Mammary epithelial cell (primary cell): ENCODE measurements at regions of chr3 and their contacts with region 1.

Region 1: GRCh38 chr3:52444860-52445793 is at the start of gene SEMA3G:
- DNase-seq: peak; percentile 50
- H3K4me3 ChIP-seq: peak within 1 kb of the TSS in 1 of 3 experiments; percentile 19
- H3K27ac ChIP-seq: no peak within 1 kb of the TSS
- H3K4me1 ChIP-seq: peaks cover 6% of the 10 kb centered on the region
- H3K27me3 ChIP-seq: no peaks in the 10 kb centered on the region
- CTCF ChIP-seq: peak; percentile 37 to 64
- total RNA-seq, gene SEMA3G: 0.45 to 0.50 TPM

Region 2: DNA sequence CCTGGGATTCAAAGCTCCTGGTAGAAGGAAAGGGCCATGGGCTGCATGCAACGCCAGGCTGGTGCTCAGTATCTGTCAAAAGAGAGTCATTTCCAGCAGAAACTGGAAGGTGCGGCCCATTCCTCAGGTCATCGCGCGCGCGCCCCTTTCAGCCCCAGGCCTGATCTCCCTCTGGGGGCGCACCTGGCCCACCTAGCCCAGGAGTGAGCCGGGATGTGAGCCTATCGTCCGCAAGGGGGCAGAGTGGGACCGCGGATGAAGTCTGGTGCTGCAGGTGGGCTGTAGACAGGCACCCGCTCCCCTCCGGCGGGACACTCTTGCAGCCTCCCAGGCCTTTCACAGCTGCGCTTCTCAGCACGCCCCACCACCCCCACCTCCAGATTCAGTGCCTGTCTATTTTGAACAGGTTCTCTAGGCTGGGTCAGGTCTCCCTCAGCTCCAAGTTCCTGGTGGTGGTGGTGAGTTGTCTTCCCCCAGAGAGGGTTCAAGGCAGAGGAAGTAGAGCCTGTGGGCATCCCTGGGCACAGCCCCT is 443.6 kb before region 1 on chr3:
- CTCF ChIA-PET with region 1: no interaction called
- dilution Hi-C with region 1: no loop called
- in situ Hi-C with region 1: no loop called
- intact Hi-C with region 1: loop called (anchors 10 kb)
- DNase-seq: peak; percentile 49
- H3K4me3 ChIP-seq: no peak overlapping the region
- H3K27ac ChIP-seq: no peak overlapping the region
- H3K4me1 ChIP-seq: peaks cover 35% of the 10 kb centered on the region
- H3K27me3 ChIP-seq: no peaks in the 10 kb centered on the region
- CTCF ChIP-seq: peak; percentile 75 to 90

Region 3: GRCh38 chr3:52088445-52089367 is 356.4 kb before region 1 on chr3:
- CTCF ChIA-PET with region 1: no interaction called
- dilution Hi-C with region 1: no loop called
- in situ Hi-C with region 1: no loop called
- intact Hi-C with region 1: no loop called
- DNase-seq: peak; percentile 53
- H3K4me3 ChIP-seq: no peak overlapping the region
- H3K27ac ChIP-seq: no peak overlapping the region
- H3K4me1 ChIP-seq: peaks cover 20% of the 10 kb centered on the region
- H3K27me3 ChIP-seq: no peaks in the 10 kb centered on the region
- CTCF ChIP-seq: no peak

Region 4: GRCh38 chr3:52238761-52239701 is 206.1 kb before region 1 on chr3 and contains the start of gene TWF2:
- CTCF ChIA-PET with region 1: no interaction called
- dilution Hi-C with region 1: no loop called
- in situ Hi-C with region 1: no loop called
- intact Hi-C with region 1: loop called (anchors 5 kb)
- DNase-seq: peak; percentile 71
- H3K4me3 ChIP-seq: peak within 1 kb of the TSS; percentile 51 to 99 (median 95)
- H3K27ac ChIP-seq: peak within 1 kb of the TSS; percentile 66
- H3K4me1 ChIP-seq: peaks cover 41% of the 10 kb centered on the region
- H3K27me3 ChIP-seq: no peaks in the 10 kb centered on the region
- CTCF ChIP-seq: peak; percentile 24 to 48
- total RNA-seq, gene TWF2: 67.8 to 96.2 TPM

Region 5: DNA sequence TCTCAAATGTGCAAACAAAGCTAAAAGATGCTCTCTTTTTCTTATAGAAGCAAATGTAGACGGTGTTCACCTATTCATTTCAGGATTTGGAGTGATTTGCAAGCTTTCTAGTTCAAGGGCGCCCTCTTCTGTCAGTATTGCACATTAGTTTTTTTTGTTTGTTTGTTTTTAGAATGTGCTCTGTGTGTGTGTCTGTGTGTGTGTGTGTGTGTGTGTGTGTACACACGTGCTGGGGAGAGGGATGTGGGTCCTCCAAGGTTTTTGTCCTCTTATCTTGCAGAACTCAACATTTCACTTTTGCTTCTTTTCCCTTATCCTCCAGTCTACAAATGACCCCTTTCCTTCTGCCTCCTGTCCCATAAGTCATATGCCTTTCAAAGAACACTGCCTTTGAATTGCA is 105.5 kb before region 1 on chr3:
- CTCF ChIA-PET with region 1: interaction called, 14 read pairs
- dilution Hi-C with region 1: no loop called
- in situ Hi-C with region 1: no loop called
- intact Hi-C with region 1: loop called (anchors 5 kb)
- DNase-seq: peak; percentile 60
- H3K4me3 ChIP-seq: no peak overlapping the region
- H3K27ac ChIP-seq: no peak overlapping the region
- H3K4me1 ChIP-seq: no peaks in the 10 kb centered on the region
- H3K27me3 ChIP-seq: no peaks in the 10 kb centered on the region
- CTCF ChIP-seq: peak; percentile 53 to 72

Region 6: DNA sequence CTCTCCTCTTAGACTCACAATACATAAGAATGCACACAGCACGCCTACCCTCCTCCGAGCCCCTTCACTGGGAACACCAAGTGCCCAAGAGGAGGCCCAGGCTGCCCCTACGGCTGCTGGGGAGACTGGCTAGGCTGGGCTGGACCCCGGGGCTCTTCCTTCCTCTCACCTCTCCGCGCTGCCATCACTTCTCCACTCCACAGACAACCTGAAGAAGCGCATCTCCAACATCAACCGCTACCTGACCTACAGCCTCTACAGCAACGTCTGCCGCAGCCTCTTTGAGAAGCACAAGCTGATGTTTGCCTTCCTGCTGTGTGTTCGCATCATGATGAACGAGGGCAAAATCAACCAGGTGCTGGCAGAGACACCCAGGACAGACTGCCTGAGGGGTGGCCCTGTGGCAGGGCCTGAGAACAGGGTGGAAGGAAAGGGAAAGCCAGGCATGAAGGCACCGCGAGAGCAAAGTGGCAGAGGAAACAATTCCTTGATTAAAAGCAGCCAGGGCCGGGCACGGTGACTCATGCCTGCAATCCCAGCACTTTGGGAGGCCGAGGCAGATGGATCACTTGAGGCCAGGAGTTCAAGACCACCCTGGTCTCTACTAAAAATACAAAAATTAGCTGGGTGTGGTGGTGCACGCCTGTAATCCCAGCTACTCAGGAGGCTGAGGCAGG is 51.9 kb before region 1 on chr3:
- CTCF ChIA-PET with region 1: no interaction called
- dilution Hi-C with region 1: loop called (anchors 5 kb)
- in situ Hi-C with region 1: no loop called
- intact Hi-C with region 1: no loop called
- DNase-seq: no peak
- H3K4me3 ChIP-seq: no peak overlapping the region
- H3K27ac ChIP-seq: no peak overlapping the region
- H3K4me1 ChIP-seq: no peaks in the 10 kb centered on the region
- H3K27me3 ChIP-seq: no peaks in the 10 kb centered on the region
- CTCF ChIP-seq: no peak

Region 7: GRCh38 chr3:52428151-52429005 is 16.7 kb before region 1 on chr3:
- CTCF ChIA-PET with region 1: no interaction called
- dilution Hi-C with region 1: no loop called
- in situ Hi-C with region 1: no loop called
- intact Hi-C with region 1: loop called (anchors 1 kb)
- DNase-seq: peak; percentile 60
- H3K4me3 ChIP-seq: no peak overlapping the region
- H3K27ac ChIP-seq: no peak overlapping the region
- H3K4me1 ChIP-seq: no peaks in the 10 kb centered on the region
- H3K27me3 ChIP-seq: no peaks in the 10 kb centered on the region
- CTCF ChIP-seq: peak; percentile 81 to 94